Naive thymus-derived CD4-positive, alpha-beta T cell (primary cell): ENCODE measurements at regions of chr5 and their contacts with region 1.

Region 1: DNA sequence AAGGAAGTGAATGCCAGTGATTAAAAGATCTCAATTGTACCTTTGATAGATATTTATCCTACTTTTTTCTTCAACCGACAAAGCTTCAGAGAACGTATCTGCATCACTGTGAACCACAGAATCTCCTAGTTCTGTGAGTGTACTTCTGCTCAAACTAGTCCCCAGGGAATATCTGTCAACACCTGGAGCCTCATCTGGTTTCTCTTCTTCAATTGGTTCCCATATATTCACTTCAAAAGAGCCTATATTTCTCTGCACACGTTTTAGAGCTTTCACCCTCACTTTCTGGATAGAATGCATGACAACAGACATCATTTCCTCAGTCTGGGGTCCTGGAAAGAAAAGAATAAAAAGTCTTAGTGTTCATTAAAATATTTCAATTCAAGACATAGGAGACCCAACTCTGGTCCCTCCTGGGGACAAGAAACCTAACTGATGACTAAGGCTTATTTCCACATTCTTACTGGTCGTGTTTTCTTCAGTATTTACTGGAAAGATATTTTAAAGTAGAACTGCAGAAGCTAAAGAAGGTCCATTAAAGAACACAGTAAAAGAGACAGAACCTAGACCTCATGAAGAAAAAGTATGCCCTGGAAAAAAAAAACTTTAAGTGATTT is 64.3 kb downstream of the CPLANE1 start:
- DNase-seq: no peak
- ATAC-seq: no peak
- H3K4me3 ChIP-seq: no peak overlapping the region
- H3K4me3 Mint-ChIP-seq: no peak overlapping the region
- H3K27ac ChIP-seq: no peak overlapping the region
- H3K27ac Mint-ChIP-seq: no peak overlapping the region
- H3K4me1 ChIP-seq: no peaks in the 10 kb centered on the region
- H3K4me1 Mint-ChIP-seq: peaks cover 0 to 4% (median 0%) of the 10 kb centered on the region in 7 donors
- H3K27me3 ChIP-seq: no peaks in the 10 kb centered on the region
- H3K27me3 Mint-ChIP-seq: no peaks in the 10 kb centered on the region

Region 2: GRCh38 chr5:36978196-36978595 is 206.7 kb before region 1 on chr5:
- CTCF ChIA-PET with region 1: no interaction called
- POLR2A ChIA-PET with region 1: no interaction called
- intact Hi-C with region 1: no loop called
- DNase-seq: no peak
- ATAC-seq: no peak
- H3K4me3 ChIP-seq: no peak overlapping the region
- H3K4me3 Mint-ChIP-seq: peak overlapping the region in 4 of 10 donors; percentile 11 to 32 (median 18)
- H3K27ac ChIP-seq: no peak overlapping the region
- H3K27ac Mint-ChIP-seq: no peak overlapping the region
- H3K4me1 ChIP-seq: peaks cover 0 to 5% of the 10 kb centered on the region in 2 donors
- H3K4me1 Mint-ChIP-seq: peaks cover 6 to 71% (median 50%) of the 10 kb centered on the region in 7 donors
- H3K27me3 ChIP-seq: no peaks in the 10 kb centered on the region
- H3K27me3 Mint-ChIP-seq: no peaks in the 10 kb centered on the region

Region 3: GRCh38 chr5:37071901-37072581 is 112.8 kb before region 1 on chr5:
- CTCF ChIA-PET with region 1: no interaction called
- POLR2A ChIA-PET with region 1: no interaction called
- intact Hi-C with region 1: no loop called
- DNase-seq: no peak
- ATAC-seq: no peak
- H3K4me3 ChIP-seq: no peak overlapping the region
- H3K4me3 Mint-ChIP-seq: no peak overlapping the region
- H3K27ac ChIP-seq: no peak overlapping the region
- H3K27ac Mint-ChIP-seq: no peak overlapping the region
- H3K4me1 ChIP-seq: no peaks in the 10 kb centered on the region
- H3K4me1 Mint-ChIP-seq: no peaks in the 10 kb centered on the region
- H3K27me3 ChIP-seq: no peaks in the 10 kb centered on the region
- H3K27me3 Mint-ChIP-seq: no peaks in the 10 kb centered on the region

Region 4: DNA sequence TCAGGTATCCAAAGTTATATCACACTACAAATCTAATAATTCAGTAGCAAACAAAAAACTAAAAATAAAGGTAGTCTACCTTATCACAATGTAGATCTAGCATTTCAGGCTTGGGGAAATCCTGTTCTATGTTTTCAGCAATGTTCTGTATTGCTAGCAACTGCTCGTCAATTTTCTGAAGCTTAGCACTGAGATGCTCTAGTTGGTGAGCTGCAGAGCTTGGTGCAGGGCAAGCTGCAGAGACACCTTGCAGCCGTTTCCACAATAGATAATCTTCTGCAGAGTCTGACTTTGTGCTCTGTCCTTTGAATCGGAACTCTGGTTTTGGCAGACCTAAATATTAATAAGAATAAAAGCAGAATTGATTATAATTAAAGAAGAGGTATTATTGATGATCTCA is 31.2 kb before region 1 on chr5:
- CTCF ChIA-PET with region 1: no interaction called
- POLR2A ChIA-PET with region 1: no interaction called
- intact Hi-C with region 1: loop called in 1 of 2 experiments (anchors 5 kb)
- DNase-seq: no peak
- ATAC-seq: no peak
- H3K4me3 ChIP-seq: no peak overlapping the region
- H3K4me3 Mint-ChIP-seq: no peak overlapping the region
- H3K27ac ChIP-seq: no peak overlapping the region
- H3K27ac Mint-ChIP-seq: no peak overlapping the region
- H3K4me1 ChIP-seq: no peaks in the 10 kb centered on the region
- H3K4me1 Mint-ChIP-seq: peaks cover 0 to 6% (median 4%) of the 10 kb centered on the region in 7 donors
- H3K27me3 ChIP-seq: no peaks in the 10 kb centered on the region
- H3K27me3 Mint-ChIP-seq: no peaks in the 10 kb centered on the region